ENCODE measurements at regions of chr9 and their contacts with region 1.

Region 1: DNA sequence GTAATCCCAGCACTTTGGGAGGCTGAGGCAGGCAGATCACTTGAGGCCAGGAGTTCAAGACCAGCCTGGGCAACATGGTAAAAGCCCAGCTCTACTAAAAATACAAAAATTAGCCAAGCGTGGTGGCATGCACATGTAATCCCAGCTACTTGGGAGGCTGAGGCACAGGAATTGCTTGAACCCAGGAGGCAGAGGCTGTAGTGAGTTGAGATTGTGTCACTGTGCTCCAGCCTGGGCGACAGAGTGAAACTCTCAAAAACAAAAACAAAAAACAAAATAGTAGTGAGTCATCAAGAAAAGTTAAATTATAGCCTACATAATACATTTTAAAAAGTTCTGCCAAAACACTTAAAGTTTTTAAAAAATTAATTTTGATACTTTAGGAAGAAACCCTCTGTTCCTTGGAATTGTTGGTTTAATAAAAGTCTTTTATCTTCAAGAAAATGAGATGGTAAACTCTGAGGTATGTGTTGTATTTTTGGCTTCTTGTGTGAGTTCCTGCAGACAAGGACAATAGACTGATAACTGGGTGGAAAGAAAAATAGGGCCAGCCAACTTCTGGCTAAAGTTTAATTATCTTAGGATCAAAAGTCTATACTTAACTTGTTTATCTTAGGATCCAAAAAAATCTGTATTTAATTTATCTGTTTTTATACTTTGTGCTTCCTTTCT is 9.3 kb downstream of the RUSC2 start:
- DNase-seq: no peak
- ATAC-seq: peak; percentile 52 to 72
- H3K4me3 ChIP-seq: no peak overlapping the region
- H3K27ac ChIP-seq: peak overlapping the region; percentile 45
- H3K4me1 ChIP-seq: peaks cover 11% of the 10 kb centered on the region
- H3K27me3 ChIP-seq: no peaks in the 10 kb centered on the region

Region 2: GRCh38 chr9:35374436-35374835 is 124.7 kb before region 1 on chr9:
- intact Hi-C with region 1: no loop called
- DNase-seq: no peak
- ATAC-seq: no peak
- H3K4me3 ChIP-seq: no peak overlapping the region
- H3K27ac ChIP-seq: no peak overlapping the region
- H3K4me1 ChIP-seq: peaks cover 3% of the 10 kb centered on the region
- H3K27me3 ChIP-seq: no peaks in the 10 kb centered on the region

Region 3: DNA sequence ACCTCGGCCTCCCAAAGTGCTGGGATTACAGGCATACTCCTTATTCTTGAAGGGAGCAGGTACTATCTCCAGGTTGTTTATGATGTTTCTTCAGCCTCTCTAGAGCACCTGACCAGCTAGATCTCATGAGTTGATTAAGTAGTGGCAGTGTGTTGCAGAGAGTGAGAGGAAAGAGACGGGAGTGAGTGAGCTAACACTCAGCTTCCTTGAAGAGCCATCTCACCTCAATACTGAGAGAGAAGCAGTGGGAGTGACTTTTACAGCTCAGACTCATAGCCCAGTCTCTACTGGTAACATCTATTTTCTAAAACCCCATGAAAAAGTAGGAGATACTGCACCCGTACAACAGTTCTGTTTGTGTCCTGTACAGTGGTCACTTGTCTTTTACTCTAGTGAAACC is 53.2 kb before region 1 on chr9:
- intact Hi-C with region 1: no loop called
- DNase-seq: no peak
- ATAC-seq: no peak
- H3K4me3 ChIP-seq: no peak overlapping the region
- H3K27ac ChIP-seq: no peak overlapping the region
- H3K4me1 ChIP-seq: no peaks in the 10 kb centered on the region
- H3K27me3 ChIP-seq: no peaks in the 10 kb centered on the region

Region 4: DNA sequence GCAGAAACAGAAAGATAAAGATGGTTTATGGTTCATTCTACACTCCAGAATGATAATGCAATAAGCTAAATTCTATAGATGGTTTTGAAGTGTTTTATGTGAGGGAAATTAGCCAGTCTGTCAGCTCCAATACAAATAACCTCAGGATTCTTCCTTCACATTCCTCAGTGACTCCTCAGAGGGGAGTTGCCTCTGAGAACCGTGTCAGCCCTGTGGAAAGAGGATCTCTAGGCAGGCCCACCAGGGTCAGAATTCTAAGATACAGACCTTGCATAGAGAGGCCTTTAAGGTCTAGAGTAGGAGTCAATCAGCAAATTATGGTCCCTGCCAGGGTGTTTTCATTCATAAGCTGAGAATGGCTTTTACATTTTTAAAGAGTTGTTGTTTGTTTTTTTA is 17.3 kb after region 1 on chr9:
- intact Hi-C with region 1: loop called in 1 of 4 experiments (anchors 2 kb)
- DNase-seq: no peak
- ATAC-seq: peak in 1 of 2 donors; percentile 41
- H3K4me3 ChIP-seq: no peak overlapping the region
- H3K27ac ChIP-seq: no peak overlapping the region
- H3K4me1 ChIP-seq: peaks cover 34% of the 10 kb centered on the region
- H3K27me3 ChIP-seq: no peaks in the 10 kb centered on the region

Measured in right cardiac atrium (tissue), 5 donors.